Colonic mucosa (tissue), 4 donors: ENCODE measurements at regions of chr10 and their contacts with region 1.

Region 1: GRCh38 chr10:45594276-45595106 is 78.1 kb downstream of the ZFAND4 start:
- DNase-seq: peak; percentile 93
- H3K4me3 ChIP-seq: peak overlapping the region; percentile 77
- H3K27ac ChIP-seq: peak overlapping the region; percentile 54
- H3K4me1 ChIP-seq: peaks cover 6% of the 10 kb centered on the region
- H3K27me3 ChIP-seq: no peaks in the 10 kb centered on the region
- CTCF ChIP-seq: no peak

Region 2: GRCh38 chr10:45453639-45454255 is 140.7 kb before region 1 on chr10:
- intact Hi-C with region 1: no loop called
- DNase-seq: no peak
- H3K4me3 ChIP-seq: no peak overlapping the region
- H3K27ac ChIP-seq: no peak overlapping the region
- H3K4me1 ChIP-seq: no peaks in the 10 kb centered on the region
- H3K27me3 ChIP-seq: no peaks in the 10 kb centered on the region
- CTCF ChIP-seq: no peak

Region 3: DNA sequence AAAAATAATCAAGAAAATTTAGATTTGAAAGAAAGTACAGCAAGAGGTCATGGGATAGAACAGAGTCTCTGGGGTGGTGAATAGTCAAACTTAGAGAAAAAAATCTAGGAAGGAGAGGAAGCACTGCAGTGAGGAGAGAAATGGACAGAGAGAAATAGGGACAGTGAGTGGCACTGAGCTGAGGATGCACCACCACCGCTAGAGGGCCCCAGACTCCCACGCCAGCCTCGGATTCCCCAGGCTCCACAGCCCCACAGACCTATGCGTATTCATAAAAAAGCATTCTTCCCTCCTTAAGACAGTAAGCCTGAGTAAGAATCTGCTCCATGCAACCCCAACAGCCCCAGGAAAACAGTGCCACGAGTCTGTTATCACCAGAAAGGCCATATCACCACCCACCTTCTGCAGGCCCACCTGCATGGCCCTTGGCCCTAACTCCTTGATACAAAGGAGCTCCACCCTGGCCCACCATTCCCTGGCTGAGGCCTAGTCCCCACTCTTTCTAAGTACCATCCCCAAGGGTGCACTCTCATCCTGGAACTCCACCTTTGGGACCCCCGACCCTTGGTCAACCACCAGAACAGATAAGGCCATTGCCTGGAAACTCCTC is 129.4 kb before region 1 on chr10:
- intact Hi-C with region 1: loop called (anchors 10 kb)
- DNase-seq: peak; percentile 83
- H3K4me3 ChIP-seq: no peak overlapping the region
- H3K27ac ChIP-seq: no peak overlapping the region
- H3K4me1 ChIP-seq: no peaks in the 10 kb centered on the region
- H3K27me3 ChIP-seq: no peaks in the 10 kb centered on the region
- CTCF ChIP-seq: peak; percentile 91

Region 4: GRCh38 chr10:45672181-45673073 is 77.9 kb after region 1 on chr10 and contains the start of gene ZFAND4:
- intact Hi-C with region 1: loop called (anchors 10 kb)
- DNase-seq: peak; percentile 96
- H3K4me3 ChIP-seq: peak within 1 kb of the TSS; percentile 63
- H3K27ac ChIP-seq: peak within 1 kb of the TSS; percentile 88
- H3K4me1 ChIP-seq: peaks cover 4% of the 10 kb centered on the region
- H3K27me3 ChIP-seq: no peaks in the 10 kb centered on the region
- CTCF ChIP-seq: peak; percentile 49
- total RNA-seq, gene ZFAND4: 11.3 to 15.9 TPM